ENCODE measurements at regions of chr3 and their contacts with region 1.

Region 1: DNA sequence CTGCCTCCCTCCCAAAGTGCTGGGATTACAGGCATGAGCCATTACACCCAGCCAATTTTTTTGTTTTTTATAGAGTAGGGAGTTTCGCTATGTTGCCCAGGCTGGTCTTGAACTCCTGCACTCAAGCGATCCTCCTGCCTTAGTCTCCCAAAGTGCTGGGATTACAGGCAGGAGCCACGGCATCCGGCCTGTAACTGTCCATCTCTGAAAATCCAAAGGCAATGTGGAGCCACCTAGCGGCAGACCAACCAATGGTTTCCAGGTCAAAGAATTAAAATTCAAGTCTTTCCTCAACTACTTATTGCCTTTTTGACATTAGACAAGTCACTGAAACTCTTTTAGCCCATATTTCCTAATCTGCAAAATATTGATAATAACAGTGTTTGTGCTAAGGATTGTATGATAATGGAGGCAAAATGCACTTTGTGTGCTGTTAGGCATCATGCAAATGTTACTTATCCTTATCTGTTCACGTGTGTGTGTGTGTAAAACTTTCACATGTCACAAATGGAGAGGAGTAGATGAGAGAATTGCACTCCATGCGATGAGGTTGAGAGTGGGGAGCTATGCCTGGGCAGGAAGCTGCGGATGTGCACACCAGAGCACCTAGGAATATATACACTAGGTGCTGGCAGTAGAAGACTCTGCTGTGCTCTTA is 48.7 kb downstream of the COL8A1 start:
- DNase-seq: peak; percentile 74
- ATAC-seq: peak; percentile 72
- H3K4me3 ChIP-seq: no peak overlapping the region
- H3K27ac ChIP-seq: no peak overlapping the region
- H3K4me1 ChIP-seq: peaks cover 3% of the 10 kb centered on the region; the same call in 1 of the 2 replicates
- H3K27me3 ChIP-seq: no peaks in the 10 kb centered on the region
- CTCF ChIP-seq: peak; percentile 74
- POLR2A ChIP-seq: no peak
- RAD21 ChIP-seq: peak; percentile 79

Region 2: GRCh38 chr3:99499235-99500158 is 187.6 kb before region 1 on chr3:
- CTCF ChIA-PET with region 1: interaction called, 4 read pairs
- POLR2A ChIA-PET with region 1: no interaction called
- dilution Hi-C with region 1: no loop called
- in situ Hi-C with region 1: no loop called
- intact Hi-C with region 1: loop called (anchors 2 kb)
- DNase-seq: peak; percentile 73
- ATAC-seq: peak; percentile 65
- H3K4me3 ChIP-seq: no peak overlapping the region
- H3K27ac ChIP-seq: no peak overlapping the region
- H3K4me1 ChIP-seq: peaks cover 7% of the 10 kb centered on the region
- H3K27me3 ChIP-seq: no peaks in the 10 kb centered on the region
- CTCF ChIP-seq: peak; percentile 87
- POLR2A ChIP-seq: no peak
- RAD21 ChIP-seq: peak; percentile 79

Region 3: GRCh38 chr3:99731499-99731898 is 44.4 kb after region 1 on chr3:
- CTCF ChIA-PET with region 1: no interaction called
- POLR2A ChIA-PET with region 1: no interaction called
- dilution Hi-C with region 1: no loop called
- in situ Hi-C with region 1: no loop called
- intact Hi-C with region 1: no loop called
- DNase-seq: no peak
- ATAC-seq: no peak; the same call in 1 of the 2 replicates
- H3K4me3 ChIP-seq: no peak overlapping the region
- H3K27ac ChIP-seq: no peak overlapping the region
- H3K4me1 ChIP-seq: peaks cover 2% of the 10 kb centered on the region
- H3K27me3 ChIP-seq: no peaks in the 10 kb centered on the region
- CTCF ChIP-seq: no peak
- POLR2A ChIP-seq: no peak
- RAD21 ChIP-seq: no peak

Region 4: GRCh38 chr3:99747915-99748314 is 60.8 kb after region 1 on chr3:
- CTCF ChIA-PET with region 1: interaction called, 3 read pairs
- POLR2A ChIA-PET with region 1: no interaction called
- dilution Hi-C with region 1: no loop called
- in situ Hi-C with region 1: no loop called
- intact Hi-C with region 1: loop called (anchors 5 kb)
- DNase-seq: peak; percentile 32
- ATAC-seq: peak; percentile 78
- H3K4me3 ChIP-seq: no peak overlapping the region
- H3K27ac ChIP-seq: no peak overlapping the region
- H3K4me1 ChIP-seq: peaks cover 8% of the 10 kb centered on the region; the same call in 1 of the 2 replicates
- H3K27me3 ChIP-seq: no peaks in the 10 kb centered on the region
- CTCF ChIP-seq: peak; percentile 50
- POLR2A ChIP-seq: no peak
- RAD21 ChIP-seq: peak; percentile 51

Measured in IMR-90 (cell line).